ENCODE measurements at regions of chr7 and their contacts with region 1.

Region 1: GRCh38 chr7:143240291-143241168 is 18.7 kb downstream of the TAS2R40 start:
- DNase-seq: peak in 3 of 4 donors; percentile 69 to 83 (median 71)
- ATAC-seq: peak; percentile 97
- H3K4me3 ChIP-seq: no peak overlapping the region
- H3K27ac ChIP-seq: peak overlapping the region; percentile 39 to 84
- H3K4me1 ChIP-seq: peaks cover 0 to 55% of the 10 kb centered on the region in 2 donors
- H3K27me3 ChIP-seq: no peaks in the 10 kb centered on the region
- CTCF ChIP-seq: peak; percentile 93 to 94

Region 2: GRCh38 chr7:143299840-143300239 is 59.3 kb after region 1 on chr7:
- intact Hi-C with region 1: loop called in 1 of 2 experiments (anchors 5 kb)
- DNase-seq: no peak
- ATAC-seq: peak; percentile 40
- H3K4me3 ChIP-seq: no peak overlapping the region
- H3K27ac ChIP-seq: peak overlapping the region in 1 of 2 donors; percentile 74
- H3K4me1 ChIP-seq: peaks cover 0 to 57% of the 10 kb centered on the region in 2 donors
- H3K27me3 ChIP-seq: no peaks in the 10 kb centered on the region
- CTCF ChIP-seq: peak; percentile 23 to 40

Region 3: GRCh38 chr7:143380255-143380645 is 139.7 kb after region 1 on chr7:
- intact Hi-C with region 1: no loop called
- DNase-seq: peak; percentile 91 to 93 (median 92)
- ATAC-seq: peak; percentile 78
- H3K4me3 ChIP-seq: peak overlapping the region; percentile 92 to 98
- H3K27ac ChIP-seq: peak overlapping the region; percentile 97 to 100
- H3K4me1 ChIP-seq: peaks cover 26 to 77% of the 10 kb centered on the region in 2 donors
- H3K27me3 ChIP-seq: no peaks in the 10 kb centered on the region
- CTCF ChIP-seq: peak; percentile 90 to 93

Region 4: DNA sequence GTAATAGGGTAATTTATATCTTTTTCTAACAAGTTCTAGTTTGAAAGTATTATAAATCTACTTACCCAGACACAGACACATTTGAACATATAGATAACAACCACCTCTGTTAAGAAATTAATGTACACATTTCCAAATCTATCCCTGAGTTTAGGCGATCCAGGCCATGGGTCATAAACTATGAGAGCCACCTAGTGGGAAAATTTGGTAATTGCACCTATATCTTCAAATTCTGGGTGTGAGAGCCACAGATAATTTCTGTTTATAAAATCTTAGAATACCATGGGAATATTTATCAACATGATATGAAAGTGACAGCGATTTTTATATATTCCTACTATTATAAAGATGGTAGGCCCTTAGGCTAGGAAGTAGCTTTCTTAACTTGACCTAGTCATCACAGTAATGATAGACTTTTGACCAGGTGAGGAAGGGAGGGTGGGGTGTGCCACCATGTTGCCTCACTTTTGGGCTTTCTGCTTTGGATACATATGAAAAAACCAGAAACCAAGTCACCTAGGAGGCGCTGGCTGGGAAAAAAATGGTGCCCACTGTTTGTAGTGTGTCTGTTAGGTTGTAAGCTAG is 176.1 kb after region 1 on chr7:
- intact Hi-C with region 1: loop called in 1 of 2 experiments (anchors 5 kb)
- DNase-seq: peak in 1 of 4 donors; percentile 52
- ATAC-seq: peak; percentile 83
- H3K4me3 ChIP-seq: no peak overlapping the region
- H3K27ac ChIP-seq: no peak overlapping the region
- H3K4me1 ChIP-seq: peaks cover 0 to 38% of the 10 kb centered on the region in 2 donors
- H3K27me3 ChIP-seq: no peaks in the 10 kb centered on the region
- CTCF ChIP-seq: peak; percentile 76 to 82

Measured in left lung (tissue), 14 donors.